ENCODE measurements at regions of chr3 and their contacts with region 1.

Region 1: GRCh38 chr3:190205739-190206138 is 85.0 kb upstream of the P3H2 start:
- DNase-seq: no peak
- ATAC-seq: no peak
- H3K4me3 ChIP-seq: no peak overlapping the region
- H3K27ac ChIP-seq: no peak overlapping the region
- H3K4me1 ChIP-seq: peaks cover 0 to 4% of the 10 kb centered on the region in 2 experiments; a peak in 2 of 4 replicates
- H3K27me3 ChIP-seq: no peaks in the 10 kb centered on the region
- CTCF ChIP-seq: no peak
- POLR2A ChIP-seq: no peak
- RAD21 ChIP-seq: no peak

Region 2: DNA sequence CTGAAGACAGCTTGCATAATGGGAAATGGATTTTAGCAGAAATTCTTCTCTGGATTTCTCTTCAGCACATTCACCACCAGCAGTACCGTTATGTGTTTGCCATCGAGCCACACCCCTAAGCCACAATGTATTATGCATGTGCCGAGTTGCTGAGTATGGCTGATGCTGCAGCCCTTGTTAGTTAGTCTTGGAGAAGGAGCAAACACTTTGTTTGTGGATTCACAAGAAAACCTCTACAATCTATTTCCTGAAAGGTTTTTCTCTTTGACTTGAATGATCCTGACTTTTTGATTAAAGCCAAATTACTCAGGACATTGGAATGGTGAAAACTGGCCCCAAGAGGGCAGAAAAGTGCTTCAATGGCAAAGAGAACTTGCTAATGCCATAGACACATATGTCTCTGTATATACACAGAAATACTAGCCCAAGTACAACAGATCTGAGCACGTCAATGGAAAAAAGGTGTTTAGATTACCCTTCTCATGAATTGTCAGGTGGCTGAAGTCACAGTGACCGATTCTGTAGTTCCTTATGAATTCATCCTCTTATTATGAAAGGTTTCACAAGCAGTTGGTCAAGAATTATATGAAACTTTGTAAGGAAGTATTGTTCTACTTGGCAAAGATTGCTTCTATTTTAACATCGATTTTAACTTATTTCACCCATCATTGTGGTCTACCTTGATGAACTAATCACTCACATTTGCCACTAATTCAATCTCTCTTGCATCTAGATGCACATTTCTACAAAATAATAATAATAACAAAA is 188.0 kb before region 1 on chr3:
- CTCF ChIA-PET with region 1: no interaction called
- POLR2A ChIA-PET with region 1: no interaction called
- RAD21 ChIA-PET with region 1: no interaction called
- intact Hi-C with region 1: loop called (anchors 1 kb)
- DNase-seq: peak; percentile 31
- ATAC-seq: peak; percentile 71
- H3K4me3 ChIP-seq: no peak overlapping the region
- H3K27ac ChIP-seq: no peak overlapping the region
- H3K4me1 ChIP-seq: peaks cover 6 to 21% of the 10 kb centered on the region in 2 experiments
- H3K27me3 ChIP-seq: no peaks in the 10 kb centered on the region; the same call in 1 of the 2 replicates
- CTCF ChIP-seq: peak; percentile 25 to 68 (median 51); a peak in 4 of 6 replicates
- POLR2A ChIP-seq: no peak
- RAD21 ChIP-seq: peak; percentile 83

Region 3: DNA sequence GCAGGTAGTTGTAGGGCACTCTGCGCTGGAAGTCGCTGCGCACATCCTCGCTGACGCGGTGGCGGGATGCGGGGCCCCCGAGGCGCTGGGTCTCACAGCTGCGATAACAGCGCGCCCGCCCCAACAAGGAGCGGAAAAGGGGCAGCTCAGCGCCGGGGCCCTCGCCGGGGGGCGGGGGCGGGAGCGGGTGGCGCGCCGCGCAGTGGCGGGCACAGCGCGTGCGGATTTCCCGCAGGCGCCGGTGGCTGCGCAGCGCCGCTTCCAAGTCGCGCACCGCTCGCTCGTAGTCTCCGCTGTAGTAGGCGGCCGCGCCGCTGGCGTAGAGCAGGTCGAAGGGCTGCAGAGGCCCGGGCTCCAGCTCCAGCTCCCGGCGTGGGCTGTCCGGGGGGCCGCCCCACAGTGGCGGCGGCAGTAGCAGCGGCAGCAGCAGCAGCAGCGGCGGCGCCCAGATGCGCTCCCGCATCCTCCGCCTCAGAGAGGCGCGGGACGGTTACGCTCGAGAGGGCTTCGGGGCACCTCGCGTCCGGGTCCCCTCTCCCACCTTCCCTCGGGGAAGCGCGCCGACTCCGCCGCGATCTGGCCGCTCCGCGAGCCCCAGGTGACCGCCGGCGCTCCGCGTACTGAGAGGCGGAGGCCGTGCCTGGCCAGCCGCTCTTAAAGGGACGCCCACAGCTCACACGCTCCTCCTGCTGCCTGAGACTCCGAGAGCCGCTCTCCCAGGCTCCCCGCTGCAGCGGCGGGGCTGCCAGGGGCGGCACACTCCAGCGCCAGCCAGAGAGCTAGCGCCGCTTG is 85.3 kb before region 1 on chr3 and contains the start of gene P3H2:
- CTCF ChIA-PET with region 1: no interaction called
- POLR2A ChIA-PET with region 1: no interaction called
- RAD21 ChIA-PET with region 1: no interaction called
- intact Hi-C with region 1: no loop called
- DNase-seq: peak; percentile 64
- ATAC-seq: peak; percentile 99
- H3K4me3 ChIP-seq: peak within 1 kb of the TSS; percentile 37 to 56
- H3K27ac ChIP-seq: no peak within 1 kb of the TSS
- H3K4me1 ChIP-seq: peaks cover 3 to 24% of the 10 kb centered on the region in 2 experiments; a peak in 3 of 4 replicates
- H3K27me3 ChIP-seq: peaks cover 7% of the 10 kb centered on the region; the same call in 1 of the 2 replicates
- CTCF ChIP-seq: peak in 2 of 3 experiments; percentile 26 to 32; a peak in 4 of 6 replicates
- POLR2A ChIP-seq: no peak
- RAD21 ChIP-seq: peak; percentile 52
- total RNA-seq, gene P3H2: 0.76 TPM

Region 4: GRCh38 chr3:190414297-190414696 is 208.6 kb after region 1 on chr3:
- CTCF ChIA-PET with region 1: no interaction called
- POLR2A ChIA-PET with region 1: no interaction called
- RAD21 ChIA-PET with region 1: no interaction called
- intact Hi-C with region 1: no loop called
- DNase-seq: no peak
- ATAC-seq: no peak
- H3K4me3 ChIP-seq: no peak overlapping the region
- H3K27ac ChIP-seq: no peak overlapping the region
- H3K4me1 ChIP-seq: no peaks in the 10 kb centered on the region
- H3K27me3 ChIP-seq: no peaks in the 10 kb centered on the region
- CTCF ChIP-seq: no peak
- POLR2A ChIP-seq: no peak
- RAD21 ChIP-seq: no peak

Region 5: DNA sequence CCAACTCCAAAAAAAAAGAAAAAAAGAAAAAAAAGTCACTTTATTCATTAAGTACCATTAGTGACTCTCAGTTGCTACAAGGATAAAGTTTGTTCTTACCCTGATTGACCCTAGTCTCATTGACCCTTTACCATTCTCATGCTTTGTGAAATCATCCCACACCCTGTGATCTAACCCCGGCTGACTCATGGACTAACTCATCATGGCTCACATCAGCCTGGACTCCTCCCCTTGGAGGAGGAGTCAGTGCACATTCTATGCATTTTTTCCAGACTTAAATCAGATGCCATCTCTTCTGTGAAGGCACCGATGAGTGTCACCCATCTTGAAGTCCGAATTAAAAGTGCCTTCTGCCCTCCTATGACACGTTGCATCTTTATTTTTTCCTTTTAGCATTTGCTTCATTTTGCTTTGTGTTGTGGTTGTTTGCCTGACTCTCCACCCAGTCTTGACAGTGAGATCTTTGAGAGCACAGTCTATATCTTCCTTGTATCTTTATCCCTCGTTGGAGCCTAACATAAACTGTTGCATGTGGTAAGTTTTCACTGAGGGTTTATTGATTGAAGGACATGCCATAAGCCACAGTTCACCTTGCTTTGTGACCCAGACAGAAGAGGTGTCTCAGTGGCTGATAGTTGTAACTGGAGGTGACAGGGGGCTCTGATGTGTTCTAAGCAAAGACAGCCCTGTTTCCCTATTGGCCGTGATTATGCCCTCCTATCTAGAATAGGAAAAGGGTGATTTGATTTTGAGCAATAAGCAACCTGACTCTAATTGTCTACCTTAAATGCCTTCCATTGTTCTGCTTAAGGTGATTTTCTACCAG is 380.3 kb after region 1 on chr3:
- CTCF ChIA-PET with region 1: no interaction called
- POLR2A ChIA-PET with region 1: no interaction called
- RAD21 ChIA-PET with region 1: no interaction called
- intact Hi-C with region 1: no loop called
- DNase-seq: peak; percentile 81
- ATAC-seq: peak; percentile 93
- H3K4me3 ChIP-seq: peak overlapping the region in 1 of 2 experiments; percentile 10; a peak in 1 of 4 replicates
- H3K27ac ChIP-seq: no peak overlapping the region
- H3K4me1 ChIP-seq: peaks cover 11 to 25% of the 10 kb centered on the region in 2 experiments
- H3K27me3 ChIP-seq: no peaks in the 10 kb centered on the region
- CTCF ChIP-seq: no peak
- POLR2A ChIP-seq: no peak
- RAD21 ChIP-seq: no peak

Measured in HCT116 (cell line).